ENCODE measurements at regions of chr11 and their contacts with region 1.

Region 1: DNA sequence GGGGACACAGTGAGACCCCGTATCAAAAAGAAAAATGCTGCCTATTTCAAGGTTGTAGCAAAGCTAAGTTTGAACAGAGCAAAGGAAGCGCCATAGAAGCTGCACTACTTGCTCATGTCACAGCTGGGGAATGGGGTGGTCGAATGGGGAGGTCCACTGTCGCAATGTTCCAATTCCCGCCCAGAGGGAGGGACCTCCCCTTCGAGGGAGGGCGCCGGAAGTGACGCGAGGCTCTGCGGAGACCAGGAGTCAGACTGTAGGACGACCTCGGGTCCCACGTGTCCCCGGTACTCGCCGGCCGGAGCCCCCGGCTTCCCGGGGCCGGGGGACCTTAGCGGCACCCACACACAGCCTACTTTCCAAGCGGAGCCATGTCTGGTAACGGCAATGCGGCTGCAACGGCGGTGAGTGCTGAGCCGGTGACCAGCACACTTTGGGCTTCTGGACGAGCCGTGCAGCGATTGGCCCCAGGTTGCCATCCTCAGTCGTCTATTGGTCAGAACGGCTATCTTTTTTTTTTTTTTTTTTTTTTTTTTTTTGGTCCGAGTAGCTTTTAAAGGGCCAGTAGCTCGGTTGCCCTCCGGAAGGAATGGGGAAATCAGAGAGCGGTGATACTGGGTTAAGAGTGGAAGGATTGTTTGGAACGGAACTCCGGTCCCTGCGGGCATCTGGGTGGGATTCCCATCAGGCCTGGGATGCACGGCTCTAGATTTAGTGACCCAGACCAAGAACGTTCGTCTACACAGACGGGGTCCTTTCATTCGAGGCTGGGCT is at the start of gene HMBS:
- H3K4me3 ChIP-seq: peak within 1 kb of the TSS; percentile 69
- H3K27ac ChIP-seq: peak within 1 kb of the TSS; percentile 6; the same call in 1 of the 2 replicates
- H3K4me1 ChIP-seq: 0 out of 2 replicates have a peak, but pooled peaks cover 3% of the 10 kb centered on the region
- CTCF ChIP-seq: no peak

Region 2: DNA sequence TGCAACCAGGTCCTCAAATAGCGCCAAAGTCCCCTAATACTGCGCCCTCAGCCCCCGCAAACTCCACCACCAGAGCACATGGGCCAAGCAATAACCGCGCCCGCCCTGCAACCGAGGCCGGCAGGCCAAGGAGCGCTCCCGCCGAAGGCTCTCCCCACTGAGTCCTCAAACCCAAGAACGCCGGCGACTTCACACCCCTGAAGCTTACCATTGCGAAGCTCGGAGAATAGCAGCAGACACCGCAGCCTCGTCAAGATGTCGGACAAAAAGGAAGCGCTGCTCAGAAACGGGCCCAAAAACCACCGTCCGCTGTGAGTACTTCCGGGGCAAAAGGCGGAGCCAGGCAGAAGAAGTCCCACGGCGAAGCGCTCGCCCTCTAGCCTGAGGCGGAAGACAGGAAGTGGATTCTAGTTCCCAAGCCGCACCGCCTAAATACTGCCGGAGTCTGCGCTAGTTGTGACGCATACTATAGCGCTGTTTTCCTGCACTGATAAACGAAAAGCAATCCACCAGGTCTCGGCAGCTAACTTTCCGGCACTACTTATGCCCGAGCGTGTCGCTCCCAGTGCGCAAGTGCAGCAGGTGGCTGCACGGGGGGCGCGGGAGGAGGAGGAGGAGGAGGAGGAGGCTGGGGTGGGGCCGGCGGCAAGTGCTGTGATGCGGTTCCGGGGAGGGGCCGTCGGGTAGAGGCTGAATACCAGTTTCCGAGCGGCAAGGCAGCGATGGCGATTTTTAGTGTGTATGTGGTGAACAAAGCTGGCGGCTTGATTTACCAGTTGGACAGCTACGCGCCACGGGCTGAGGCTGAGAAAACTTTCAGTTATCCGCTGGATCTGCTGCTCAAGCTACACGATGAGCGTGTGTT is 66.5 kb before region 1 on chr11 and contains the starts of genes RPS25 and TRAPPC4:
- CTCF ChIA-PET with region 1: no interaction called
- POLR2A ChIA-PET with region 1: interaction called, 13 read pairs
- H3K4me3 ChIP-seq: peak within 1 kb of the TSS; percentile 63
- H3K27ac ChIP-seq: peak within 1 kb of the TSS; percentile 79
- H3K4me1 ChIP-seq: no peaks in the 10 kb centered on the region
- CTCF ChIP-seq: no peak

Region 3: GRCh38 chr11:119057000-119057769 is 27.7 kb before region 1 on chr11 and contains the start of gene HYOU1:
- CTCF ChIA-PET with region 1: interaction called, 3 read pairs
- POLR2A ChIA-PET with region 1: interaction called, 13 read pairs
- H3K4me3 ChIP-seq: peak within 1 kb of the TSS; percentile 85
- H3K27ac ChIP-seq: peak within 1 kb of the TSS; percentile 72; the same call in 1 of the 2 replicates
- H3K4me1 ChIP-seq: no peaks in the 10 kb centered on the region
- CTCF ChIP-seq: peak; percentile 62

Region 4: GRCh38 chr11:119067371-119068222 is 17.3 kb before region 1 on chr11 and contains the start of gene VPS11:
- CTCF ChIA-PET with region 1: interaction called, 3 read pairs
- POLR2A ChIA-PET with region 1: interaction called, 61 read pairs
- H3K4me3 ChIP-seq: peak within 1 kb of the TSS; percentile 99
- H3K27ac ChIP-seq: peak within 1 kb of the TSS; percentile 7; the same call in 1 of the 2 replicates
- H3K4me1 ChIP-seq: no peaks in the 10 kb centered on the region
- CTCF ChIP-seq: no peak

Region 5: DNA sequence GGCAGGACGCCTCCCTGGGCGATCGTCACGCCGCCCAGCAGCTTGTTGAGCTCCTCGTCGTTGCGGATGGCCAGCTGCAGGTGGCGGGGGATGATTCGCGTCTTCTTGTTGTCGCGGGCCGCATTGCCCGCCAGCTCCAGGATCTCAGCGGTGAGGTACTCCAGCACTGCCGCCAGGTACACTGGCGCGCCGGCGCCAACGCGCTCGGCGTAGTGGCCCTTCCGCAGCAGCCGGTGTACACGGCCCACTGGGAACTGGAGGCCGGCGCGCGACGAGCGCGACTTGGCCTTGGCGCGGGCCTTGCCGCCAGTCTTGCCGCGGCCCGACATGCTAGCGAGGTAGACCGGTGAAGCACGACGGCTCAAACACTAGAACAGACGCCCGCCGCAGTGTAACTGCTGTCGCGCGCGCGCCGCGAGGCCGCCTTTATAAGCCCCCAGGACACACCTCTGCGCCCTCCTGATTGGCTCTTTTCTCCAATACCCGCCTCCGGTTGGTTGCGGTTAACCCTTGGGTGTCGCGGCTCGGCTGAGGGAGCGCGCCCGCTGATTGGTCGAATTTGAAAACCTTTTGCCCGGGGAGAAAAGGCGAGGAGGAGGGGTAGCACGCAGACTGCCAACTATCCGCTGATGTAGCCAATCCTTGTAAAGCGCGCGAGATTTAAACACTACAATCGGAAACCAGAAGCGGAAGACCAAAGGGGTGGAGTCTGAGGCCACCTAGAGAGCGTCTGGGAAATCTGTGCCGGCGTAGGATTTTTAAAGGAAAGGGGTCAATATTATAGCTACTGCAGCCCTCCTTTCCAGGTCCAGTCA is 10.4 kb after region 1 on chr11:
- CTCF ChIA-PET with region 1: interaction called, 4 read pairs
- POLR2A ChIA-PET with region 1: interaction called, 65 read pairs
- H3K4me3 ChIP-seq: peak overlapping the region; percentile 98
- H3K27ac ChIP-seq: peak overlapping the region; percentile 82
- H3K4me1 ChIP-seq: no peaks in the 10 kb centered on the region
- CTCF ChIP-seq: peak; percentile 59

Region 6: DNA sequence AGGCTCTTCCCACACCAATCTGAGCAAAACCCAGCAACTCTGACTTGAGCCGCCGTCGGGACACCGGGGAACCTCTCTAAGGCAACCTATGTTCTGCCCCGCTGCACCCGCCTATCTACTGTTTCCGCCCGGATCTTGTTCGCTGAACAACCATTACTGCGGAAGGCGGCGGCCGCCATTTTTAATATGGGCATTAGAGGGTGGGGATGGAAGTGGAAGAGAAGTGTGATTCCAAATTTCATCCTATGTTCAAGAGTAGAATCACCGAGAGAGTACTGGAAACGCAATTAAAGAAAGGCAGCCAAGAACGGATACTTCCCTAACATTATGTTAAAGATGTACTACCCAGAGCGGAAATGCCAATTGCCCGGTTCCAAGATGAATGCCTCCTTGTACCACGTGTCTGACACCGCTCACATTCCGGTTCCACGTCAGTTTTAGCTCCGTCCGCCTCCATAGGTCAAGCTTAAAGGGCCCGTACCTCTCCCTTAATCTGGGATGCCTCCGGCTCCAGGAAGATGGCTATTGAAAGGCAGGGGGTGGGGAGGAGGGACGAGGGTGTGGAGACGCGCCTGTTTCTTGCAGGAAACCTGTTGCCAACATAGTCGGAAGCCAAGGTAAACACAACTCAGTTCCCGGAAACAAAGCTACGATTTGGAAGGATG is 17.0 kb after region 1 on chr11 and contains the start of gene DPAGT1:
- CTCF ChIA-PET with region 1: interaction called, 4 read pairs
- POLR2A ChIA-PET with region 1: interaction called, 15 read pairs
- H3K4me3 ChIP-seq: peak within 1 kb of the TSS; percentile 63
- H3K27ac ChIP-seq: peak within 1 kb of the TSS; percentile 53
- H3K4me1 ChIP-seq: no peaks in the 10 kb centered on the region
- CTCF ChIP-seq: no peak